Lower leg skin (tissue), 4 donors: ENCODE measurements at regions of chr4 and their contacts with region 1.

Region 1: DNA sequence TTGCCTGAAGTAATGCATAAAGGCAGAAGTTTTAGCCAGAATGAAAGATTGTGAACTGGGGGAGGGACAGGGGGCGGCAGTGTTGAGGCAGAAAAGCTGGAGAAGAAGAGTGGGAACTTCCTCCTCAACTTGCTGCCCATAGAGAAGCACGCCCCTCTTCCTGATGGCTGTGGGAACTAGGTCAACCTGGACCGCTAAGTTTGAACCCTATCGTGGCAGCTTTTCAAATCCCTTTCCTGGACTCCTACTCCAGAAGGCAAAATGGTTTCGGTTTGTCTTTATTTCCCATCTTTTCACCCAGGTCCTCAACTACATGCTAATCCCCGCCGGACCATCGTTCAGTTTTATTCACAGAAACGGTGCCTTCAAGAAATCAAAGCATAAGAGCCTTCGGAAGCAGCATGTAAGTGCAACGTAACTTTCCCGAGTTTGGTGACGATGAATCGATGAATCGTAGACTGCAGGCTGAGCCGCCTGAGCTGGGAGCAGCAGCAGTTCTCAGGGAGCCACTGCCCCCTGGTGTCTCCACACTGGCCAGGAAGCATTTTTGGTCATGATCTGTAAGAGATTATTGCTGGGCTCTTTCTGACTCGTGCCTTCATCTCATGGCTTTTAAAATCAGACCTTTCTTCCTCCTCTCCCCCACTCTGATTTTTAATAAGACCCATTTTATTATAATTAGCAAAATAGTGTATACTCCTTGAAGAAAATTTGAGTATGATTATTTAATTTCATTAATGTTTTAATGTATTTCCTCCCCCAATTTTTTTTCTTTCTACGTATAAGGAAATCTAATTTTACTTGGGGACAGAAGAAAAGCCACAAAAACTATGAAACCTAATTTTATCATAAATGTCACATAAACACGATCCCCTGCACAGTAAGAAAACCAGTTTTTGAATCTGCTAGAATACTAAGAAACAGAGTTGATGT is 21.4 kb downstream of the SPINK2 start:
- DNase-seq: peak; percentile 85 to 95
- H3K4me3 ChIP-seq: peak overlapping the region; percentile 51
- CTCF ChIP-seq: peak in 1 of 3 donors; percentile 74
- POLR2A ChIP-seq: no peak

Region 2: GRCh38 chr4:56575820-56576429 is 224.2 kb before region 1 on chr4:
- intact Hi-C with region 1: loop called (anchors 10 kb)
- DNase-seq: no peak
- H3K4me3 ChIP-seq: no peak overlapping the region
- CTCF ChIP-seq: no peak
- POLR2A ChIP-seq: no peak

Region 3: DNA sequence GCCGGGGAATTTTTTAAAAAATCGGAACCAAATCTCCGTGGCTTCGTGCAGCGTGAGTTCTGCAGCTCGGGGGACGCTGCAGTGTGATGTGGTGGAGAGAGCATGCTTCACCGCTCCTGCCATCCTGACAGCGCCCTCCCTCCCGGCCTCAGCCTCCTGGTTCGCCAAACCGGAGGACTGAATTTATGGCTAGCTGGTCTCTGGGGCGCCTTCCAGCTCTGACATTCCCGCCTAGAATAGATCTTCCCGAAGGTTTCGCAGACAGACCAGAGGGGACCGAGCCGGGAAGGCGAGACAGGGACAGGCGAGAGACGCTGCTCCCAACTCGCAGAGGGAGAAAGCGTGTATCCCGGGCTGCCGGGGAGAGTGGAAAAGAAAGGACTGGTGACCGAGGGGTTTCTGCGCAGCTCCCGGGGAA is 144.9 kb before region 1 on chr4:
- intact Hi-C with region 1: loop called (anchors 10 kb)
- DNase-seq: no peak
- H3K4me3 ChIP-seq: peak overlapping the region; percentile 24
- CTCF ChIP-seq: no peak
- POLR2A ChIP-seq: no peak